HCT116 (cell line): ENCODE measurements at regions of chr1 and their contacts with region 1.

Region 1: GRCh38 chr1:44730741-44731512 is at the start of gene RNU5D-1:
- DNase-seq: peak; percentile 98
- ATAC-seq: peak; percentile 77
- H3K4me3 ChIP-seq: peak within 1 kb of the TSS in 1 of 2 experiments; percentile 3; a peak in 1 of 4 replicates
- H3K27ac ChIP-seq: peak within 1 kb of the TSS; percentile 86
- H3K4me1 ChIP-seq: peaks cover 34 to 70% of the 10 kb centered on the region in 2 experiments
- H3K27me3 ChIP-seq: no peaks in the 10 kb centered on the region
- CTCF ChIP-seq: peak; percentile 47 to 82 (median 75); a peak in 5 of 6 replicates
- POLR2A ChIP-seq: peak; percentile 100
- RAD21 ChIP-seq: peak; percentile 44
- total RNA-seq, gene RNU5D-1: not detected

Region 2: DNA sequence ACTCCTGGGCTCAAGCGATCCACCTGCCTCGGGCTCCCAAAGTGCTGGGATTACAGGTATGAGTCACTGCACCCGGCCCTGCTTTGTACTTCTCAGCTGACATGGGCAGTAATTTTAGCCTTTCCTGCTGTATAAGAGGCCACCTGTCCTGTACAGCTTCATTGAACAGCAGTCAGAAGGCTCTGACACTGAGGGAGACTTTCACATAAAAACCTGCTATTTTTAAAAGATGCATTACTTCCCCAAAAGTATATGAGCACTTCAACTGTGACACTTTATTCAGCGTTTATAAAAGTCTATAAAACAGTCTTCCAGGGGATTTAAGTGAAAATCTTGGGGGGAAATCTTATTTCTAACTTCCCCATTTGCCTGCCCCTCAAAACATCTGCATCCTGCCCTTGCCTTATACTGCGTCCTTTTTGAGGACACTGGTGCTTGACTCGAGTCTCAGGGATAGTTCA is 17.6 kb before region 1 on chr1:
- CTCF ChIA-PET with region 1: interaction called, 3 read pairs
- POLR2A ChIA-PET with region 1: interaction called, 21 read pairs
- RAD21 ChIA-PET with region 1: no interaction called
- intact Hi-C with region 1: no loop called
- DNase-seq: no peak
- ATAC-seq: peak; percentile 77
- H3K4me3 ChIP-seq: no peak overlapping the region
- H3K27ac ChIP-seq: no peak overlapping the region
- H3K4me1 ChIP-seq: peaks cover 19 to 29% of the 10 kb centered on the region in 2 experiments
- H3K27me3 ChIP-seq: 0 out of 2 replicates have a peak, but pooled peaks cover 4% of the 10 kb centered on the region
- CTCF ChIP-seq: no peak
- POLR2A ChIP-seq: no peak
- RAD21 ChIP-seq: no peak

Region 3: DNA sequence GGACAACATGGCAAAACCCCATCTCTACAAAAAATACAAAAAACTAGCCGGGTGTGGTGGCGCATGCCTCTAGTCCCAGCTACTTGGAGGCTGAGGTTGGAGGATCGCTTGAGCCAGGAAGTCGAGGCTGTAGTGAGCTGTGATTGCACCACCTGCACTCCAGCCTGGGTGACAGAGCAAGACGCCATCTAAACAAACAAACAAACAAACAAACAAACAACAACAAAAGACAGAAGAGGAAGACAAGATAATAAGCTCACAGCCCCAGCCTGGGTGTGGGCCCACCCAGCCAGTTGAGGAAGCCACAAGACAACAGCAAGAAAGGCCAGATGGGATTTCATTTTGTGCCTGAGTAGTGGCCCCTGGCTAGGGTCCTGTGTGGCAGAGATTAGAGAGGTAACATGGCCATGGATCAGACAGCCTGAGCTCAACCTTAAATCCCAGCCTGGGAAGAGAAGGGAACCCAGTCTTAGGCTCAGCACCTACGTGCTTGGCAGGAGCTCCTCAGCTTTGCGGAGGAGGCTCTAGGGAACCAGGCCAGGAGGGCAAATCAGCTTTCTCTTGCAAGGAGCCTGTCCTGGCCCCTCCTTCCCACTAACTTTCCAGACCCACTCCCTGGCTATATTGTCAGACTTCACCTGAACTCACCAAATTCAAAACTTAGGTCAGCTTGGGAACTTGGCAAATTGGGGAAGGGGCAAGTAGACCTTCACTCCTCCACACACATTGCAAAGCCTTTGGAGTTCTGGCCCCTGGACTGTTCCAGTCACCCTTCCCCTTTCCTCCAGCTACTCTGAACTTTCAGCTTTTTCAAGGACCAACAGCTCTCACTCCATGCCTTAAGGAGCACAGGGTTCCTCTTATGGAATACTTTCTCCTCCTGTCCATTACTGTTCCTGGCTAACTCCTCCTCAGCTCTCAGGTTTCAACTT is 62.1 kb after region 1 on chr1:
- CTCF ChIA-PET with region 1: interaction called, 7 read pairs
- POLR2A ChIA-PET with region 1: interaction called, 17 read pairs
- RAD21 ChIA-PET with region 1: no interaction called
- intact Hi-C with region 1: no loop called
- DNase-seq: no peak
- ATAC-seq: no peak
- H3K4me3 ChIP-seq: peak overlapping the region in 1 of 2 experiments; percentile 8; a peak in 1 of 4 replicates
- H3K27ac ChIP-seq: peak overlapping the region; percentile 58
- H3K4me1 ChIP-seq: peaks cover 14 to 30% of the 10 kb centered on the region in 2 experiments; a peak in 3 of 4 replicates
- H3K27me3 ChIP-seq: no peaks in the 10 kb centered on the region
- CTCF ChIP-seq: no peak
- POLR2A ChIP-seq: no peak
- RAD21 ChIP-seq: no peak

Region 4: GRCh38 chr1:44819608-44820327 is 88.8 kb after region 1 on chr1:
- CTCF ChIA-PET with region 1: interaction called, 5 read pairs
- POLR2A ChIA-PET with region 1: interaction called, 71 read pairs
- RAD21 ChIA-PET with region 1: interaction called in 1 of 2 experiments, 3 read pairs
- intact Hi-C with region 1: no loop called
- DNase-seq: peak; percentile 96
- ATAC-seq: peak; percentile 93
- H3K4me3 ChIP-seq: peak overlapping the region; percentile 36 to 48
- H3K27ac ChIP-seq: peak overlapping the region; percentile 83
- H3K4me1 ChIP-seq: peaks cover 11 to 37% of the 10 kb centered on the region in 2 experiments
- H3K27me3 ChIP-seq: no peaks in the 10 kb centered on the region
- CTCF ChIP-seq: 0 out of 6 replicates have a peak, but pooled peaks of 1 of the 3 experiments have one; percentile 9
- POLR2A ChIP-seq: peak; percentile 100
- RAD21 ChIP-seq: peak; percentile 52

Region 5: GRCh38 chr1:45490626-45491486 is 759.9 kb after region 1 on chr1 and contains the start of gene TESK2:
- CTCF ChIA-PET with region 1: no interaction called
- POLR2A ChIA-PET with region 1: interaction called, 3 read pairs
- RAD21 ChIA-PET with region 1: no interaction called
- intact Hi-C with region 1: loop called (anchors 5 kb)
- DNase-seq: peak; percentile 100
- ATAC-seq: peak; percentile 94
- H3K4me3 ChIP-seq: peak within 1 kb of the TSS; percentile 73 to 75
- H3K27ac ChIP-seq: peak within 1 kb of the TSS; percentile 19; the same call in 1 of the 2 replicates
- H3K4me1 ChIP-seq: peaks cover 12 to 18% of the 10 kb centered on the region in 2 experiments
- H3K27me3 ChIP-seq: no peaks in the 10 kb centered on the region
- CTCF ChIP-seq: no peak
- POLR2A ChIP-seq: no peak
- RAD21 ChIP-seq: 0 out of 2 replicates have a peak, but pooled peaks have one; percentile 7
- total RNA-seq, gene TESK2: 5.0 TPM